ENCODE measurements at regions of chr11 and their contacts with region 1.

Region 1: GRCh38 chr11:33790040-33790439 is 15.7 kb upstream of the FBXO3 start:
- DNase-seq: no peak
- H3K4me3 Mint-ChIP-seq: no peak overlapping the region
- H3K27ac Mint-ChIP-seq: no peak overlapping the region
- H3K4me1 Mint-ChIP-seq: peaks cover 3% of the 10 kb centered on the region
- H3K27me3 Mint-ChIP-seq: peaks cover 36% of the 10 kb centered on the region

Region 2: GRCh38 chr11:33633241-33633901 is 156.7 kb before region 1 on chr11:
- CTCF ChIA-PET with region 1: no interaction called
- POLR2A ChIA-PET with region 1: no interaction called
- intact Hi-C with region 1: no loop called
- DNase-seq: no peak
- H3K4me3 Mint-ChIP-seq: no peak overlapping the region
- H3K27ac Mint-ChIP-seq: no peak overlapping the region
- H3K4me1 Mint-ChIP-seq: no peaks in the 10 kb centered on the region
- H3K27me3 Mint-ChIP-seq: peaks cover 37% of the 10 kb centered on the region

Region 3: GRCh38 chr11:33808228-33808828 is 18.3 kb after region 1 on chr11:
- CTCF ChIA-PET with region 1: interaction called, 17 read pairs
- POLR2A ChIA-PET with region 1: no interaction called
- intact Hi-C with region 1: no loop called
- DNase-seq: peak; percentile 89
- H3K4me3 Mint-ChIP-seq: no peak overlapping the region
- H3K27ac Mint-ChIP-seq: no peak overlapping the region
- H3K4me1 Mint-ChIP-seq: peaks cover 1% of the 10 kb centered on the region
- H3K27me3 Mint-ChIP-seq: peaks cover 6% of the 10 kb centered on the region

Measured in activated CD4-positive, alpha-beta memory T cell treated with anti-CD3 and anti-CD28 coated beads for 36 hours (primary cell).